Posterior vena cava (tissue), 2 donors: ENCODE measurements at regions of chr15 and their contacts with region 1.

Region 1: GRCh38 chr15:99565299-99566156 is at the start of gene MEF2A:
- DNase-seq: peak; percentile 99
- total RNA-seq, gene MEF2A: 90.6 to 121 TPM

Region 2: GRCh38 chr15:99476413-99477222 is 88.9 kb before region 1 on chr15:
- intact Hi-C with region 1: loop called in 1 of 2 experiments (anchors 10 kb)
- DNase-seq: peak; percentile 95

Region 3: DNA sequence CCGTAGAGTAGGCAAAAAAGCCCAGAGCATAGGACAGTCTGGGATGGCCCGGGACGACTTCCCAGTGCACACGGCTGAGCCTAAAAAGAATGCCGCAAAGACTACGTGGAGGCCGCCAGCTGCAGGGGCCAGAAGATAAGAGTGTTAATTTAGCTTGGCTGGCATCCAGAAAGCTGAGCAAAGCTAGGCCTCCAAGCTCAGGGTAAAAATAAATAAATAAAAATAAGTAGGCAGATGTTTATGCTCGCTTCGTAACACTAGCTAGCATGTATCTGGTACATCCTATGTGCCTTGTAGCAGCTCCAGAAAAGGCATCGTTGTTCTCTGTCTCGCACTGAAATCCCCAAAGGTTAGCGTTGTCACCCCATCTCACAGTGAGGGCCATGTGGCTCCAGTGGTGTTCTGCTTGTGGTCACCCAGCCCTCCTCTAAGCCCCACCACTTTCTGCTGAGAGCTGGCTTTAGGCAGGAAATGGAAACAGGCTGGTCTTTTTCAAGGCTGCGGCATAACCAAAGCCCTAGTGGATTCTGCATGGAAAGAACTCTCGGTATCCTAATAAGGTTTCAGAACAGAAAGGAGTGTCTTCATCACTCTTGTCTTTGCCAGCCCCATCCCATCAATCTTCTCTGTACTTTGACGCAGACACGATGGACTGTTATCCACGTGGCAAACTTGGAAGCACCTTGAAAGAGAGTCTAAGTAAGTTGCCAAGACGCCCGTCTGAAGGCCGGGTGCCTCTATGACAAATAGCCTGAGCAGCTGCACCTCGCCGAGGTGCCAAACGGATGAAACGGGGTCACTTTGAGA is 57.8 kb before region 1 on chr15:
- intact Hi-C with region 1: loop called in 1 of 2 experiments (anchors 5 kb)
- DNase-seq: peak; percentile 91

Region 4: GRCh38 chr15:100053474-100054121 is 488.1 kb after region 1 on chr15:
- intact Hi-C with region 1: loop called in 1 of 2 experiments (anchors 5 kb)
- DNase-seq: no peak